Activated T-helper 1 cell treated with anti-CD3 and anti-CD28 coated beads, Interleukin-12 subunit alpha, Interleukin-12 subunit beta, Interleukin-2, Interleukin-4 antibody, amounts not matched to agents 30 ng/mL and 10 ng/mL and 1 ng/mL, durations not matched to agents 14 hours and 24 hours and 36 hours (primary cell): ENCODE measurements at regions of chr11 and their contacts with region 1.

Region 1: GRCh38 chr11:13405220-13405619 is 57.8 kb downstream of the BTBD10 start:
- DNase-seq: no peak
- H3K4me3 Mint-ChIP-seq: no peak overlapping the region
- H3K27ac Mint-ChIP-seq: no peak overlapping the region
- H3K4me1 Mint-ChIP-seq: no peaks in the 10 kb centered on the region
- H3K27me3 Mint-ChIP-seq: no peaks in the 10 kb centered on the region

Region 2: GRCh38 chr11:13358596-13359270 is 46.5 kb before region 1 on chr11:
- intact Hi-C with region 1: no loop called
- DNase-seq: no peak
- H3K4me3 Mint-ChIP-seq: no peak overlapping the region
- H3K27ac Mint-ChIP-seq: no peak overlapping the region
- H3K4me1 Mint-ChIP-seq: peaks cover 7% of the 10 kb centered on the region
- H3K27me3 Mint-ChIP-seq: no peaks in the 10 kb centered on the region

Region 3: GRCh38 chr11:13450832-13451397 is 45.7 kb after region 1 on chr11:
- intact Hi-C with region 1: loop called (anchors 5 kb)
- DNase-seq: no peak
- H3K4me3 Mint-ChIP-seq: no peak overlapping the region
- H3K27ac Mint-ChIP-seq: peak overlapping the region; percentile 50
- H3K4me1 Mint-ChIP-seq: peaks cover 24% of the 10 kb centered on the region
- H3K27me3 Mint-ChIP-seq: no peaks in the 10 kb centered on the region